Activated T-helper 1 cell treated with anti-CD3 and anti-CD28 coated beads, Interleukin-12 subunit alpha, Interleukin-12 subunit beta, Interleukin-2, Interleukin-4 antibody, amounts not matched to agents 30 ng/mL and 10 ng/mL and 1 ng/mL, durations not matched to agents 14 hours and 24 hours and 36 hours (primary cell): ENCODE measurements at regions of chr10 and their contacts with region 1.

Region 1: GRCh38 chr10:132571650-132572535 is 34.3 kb downstream of the INPP5A start:
- DNase-seq: peak; percentile 73
- H3K4me3 Mint-ChIP-seq: no peak overlapping the region
- H3K27ac Mint-ChIP-seq: peak overlapping the region; percentile 86
- H3K4me1 Mint-ChIP-seq: peaks cover 25% of the 10 kb centered on the region
- H3K27me3 Mint-ChIP-seq: peaks cover 7% of the 10 kb centered on the region

Region 2: DNA sequence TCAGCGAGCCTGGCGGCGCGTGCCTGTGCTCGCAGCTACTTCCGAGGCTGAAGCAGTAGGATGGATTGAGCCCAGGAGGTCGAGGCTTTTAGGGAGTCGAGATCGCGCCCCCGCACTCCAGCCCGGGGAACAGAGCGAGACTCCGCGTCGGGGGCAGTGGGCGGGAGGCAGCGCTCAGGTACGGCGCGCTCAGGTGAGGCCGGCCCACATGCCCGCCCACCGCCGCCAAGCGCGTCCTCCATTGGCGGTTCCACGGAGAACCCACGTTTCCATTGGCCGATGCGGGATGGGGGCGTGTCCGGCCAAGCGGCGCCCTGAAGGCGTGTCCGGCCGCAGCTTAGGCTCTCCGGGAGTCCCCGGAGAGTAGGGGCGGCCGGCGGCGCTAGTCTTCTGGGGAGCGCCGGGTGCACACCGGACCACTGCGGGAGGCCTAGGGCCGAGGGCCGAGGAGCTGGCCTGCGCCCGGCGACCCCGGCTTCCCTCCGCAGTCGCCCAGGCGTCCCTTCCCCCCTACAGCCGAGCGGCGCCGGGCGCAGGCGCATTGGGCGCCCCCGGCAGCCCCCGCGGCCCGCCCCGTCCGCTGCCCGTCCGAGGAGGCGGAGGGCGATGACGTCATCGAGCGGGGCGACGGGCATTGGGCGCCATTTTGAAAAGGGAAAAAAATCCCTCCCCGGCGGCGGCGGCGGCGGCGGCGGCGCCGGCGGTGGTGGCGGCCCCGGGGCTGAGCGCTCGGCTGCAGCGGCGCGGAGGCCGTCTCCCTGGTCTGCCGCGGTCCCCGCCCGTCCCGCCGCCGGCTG is 671.3 kb before region 1 on chr10 and contains the start of gene PPP2R2D:
- intact Hi-C with region 1: no loop called
- DNase-seq: peak; percentile 95
- H3K4me3 Mint-ChIP-seq: peak within 1 kb of the TSS; percentile 91
- H3K27ac Mint-ChIP-seq: peak within 1 kb of the TSS; percentile 83
- H3K4me1 Mint-ChIP-seq: peaks cover 55% of the 10 kb centered on the region
- H3K27me3 Mint-ChIP-seq: peaks cover 18% of the 10 kb centered on the region
- total RNA-seq, gene PPP2R2D: 37.6 and 38.4 TPM in 2 replicates

Region 3: DNA sequence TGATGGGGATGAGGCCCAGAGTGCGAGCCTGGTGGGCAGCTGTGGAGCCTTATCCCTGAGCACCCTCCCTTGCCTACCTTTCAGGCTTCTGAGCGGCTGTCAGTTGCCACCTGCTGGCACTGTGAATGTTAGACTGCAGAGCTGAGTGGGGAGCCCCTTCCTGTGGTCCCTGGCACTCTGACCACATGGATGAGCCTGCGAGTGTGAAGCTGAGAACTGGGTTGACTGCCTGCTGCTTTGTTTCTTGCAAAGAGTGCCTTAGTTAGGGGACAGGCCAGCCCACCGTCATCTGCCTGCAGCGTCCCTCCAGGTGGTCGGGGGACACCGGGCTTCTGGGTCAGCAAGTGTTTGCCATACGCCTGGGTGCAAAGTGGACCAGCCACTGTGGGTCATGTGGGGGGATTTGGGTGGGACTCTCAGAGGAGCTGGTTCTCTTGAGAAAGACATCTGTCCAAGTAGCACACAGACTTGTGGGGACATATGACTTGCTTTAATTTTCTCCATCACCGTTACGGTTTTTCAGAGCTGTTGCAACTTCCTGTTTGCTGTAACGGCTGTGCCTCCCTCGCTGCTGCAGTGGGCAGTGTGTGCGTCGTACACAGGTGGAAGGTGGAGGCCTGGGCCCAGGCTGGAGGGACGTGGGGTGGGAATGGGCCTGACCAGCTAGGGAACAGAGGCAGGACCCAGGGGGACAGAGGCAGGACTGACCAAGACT is 20.6 kb before region 1 on chr10:
- intact Hi-C with region 1: loop called (anchors 1 kb)
- DNase-seq: no peak
- H3K4me3 Mint-ChIP-seq: peak overlapping the region; percentile 50
- H3K27ac Mint-ChIP-seq: peak overlapping the region; percentile 81
- H3K4me1 Mint-ChIP-seq: peaks cover 1% of the 10 kb centered on the region
- H3K27me3 Mint-ChIP-seq: no peaks in the 10 kb centered on the region

Region 4: GRCh38 chr10:132588301-132589013 is 16.6 kb after region 1 on chr10:
- intact Hi-C with region 1: loop called (anchors 1 kb)
- DNase-seq: peak; percentile 25
- H3K4me3 Mint-ChIP-seq: peak overlapping the region; percentile 62
- H3K27ac Mint-ChIP-seq: peak overlapping the region; percentile 83
- H3K4me1 Mint-ChIP-seq: peaks cover 27% of the 10 kb centered on the region
- H3K27me3 Mint-ChIP-seq: peaks cover 2% of the 10 kb centered on the region

Region 5: GRCh38 chr10:132746801-132747625 is 175.1 kb after region 1 on chr10:
- intact Hi-C with region 1: no loop called
- DNase-seq: no peak
- H3K4me3 Mint-ChIP-seq: no peak overlapping the region
- H3K27ac Mint-ChIP-seq: no peak overlapping the region
- H3K4me1 Mint-ChIP-seq: no peaks in the 10 kb centered on the region
- H3K27me3 Mint-ChIP-seq: no peaks in the 10 kb centered on the region